ENCODE measurements at regions of chr2 and their contacts with region 1.

Region 1: DNA sequence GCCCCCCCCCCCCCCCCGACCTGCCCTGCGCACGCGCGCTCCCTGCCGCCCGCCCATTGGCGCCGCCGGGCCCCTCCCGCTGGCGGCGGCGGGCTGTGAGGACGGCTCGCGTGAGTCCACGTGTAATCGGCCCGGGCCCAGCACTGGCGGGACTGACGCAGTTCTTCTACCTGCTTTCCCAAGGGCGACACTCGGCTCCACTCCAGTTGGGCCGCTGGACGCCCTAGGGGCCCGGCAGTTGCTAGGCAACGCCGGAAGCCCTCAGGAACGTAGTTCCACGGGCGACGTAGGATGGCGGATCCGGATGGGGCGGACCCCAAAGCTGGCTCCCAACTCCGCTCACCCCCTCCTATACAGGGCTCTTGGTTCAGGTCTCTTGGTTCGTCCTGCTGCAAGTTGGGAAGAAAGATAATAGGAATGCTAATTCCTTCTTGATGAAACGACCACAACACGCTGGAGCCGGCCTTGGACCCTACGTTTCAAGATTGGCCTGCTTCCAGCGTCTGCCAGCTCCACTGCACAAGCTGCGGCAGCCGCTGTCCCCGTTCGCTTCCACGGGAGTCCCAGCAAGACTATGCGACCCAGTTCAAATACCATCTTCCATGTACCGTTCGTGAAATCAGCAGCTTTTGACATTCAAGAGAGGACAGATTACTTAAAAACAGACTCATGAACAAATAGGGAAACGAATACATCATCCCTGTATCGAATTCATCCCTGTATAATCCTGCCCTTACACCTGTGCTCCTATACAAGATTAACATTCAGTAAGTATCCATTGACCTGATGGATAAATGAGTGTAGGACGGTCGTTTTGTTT is 415 bp upstream of the MCFD2 start:
- DNase-seq: peak; percentile 54 to 92 (median 74)
- ATAC-seq: peak; percentile 85
- H3K4me3 ChIP-seq: peak overlapping the region; percentile 80
- H3K4me3 Mint-ChIP-seq: peak overlapping the region; percentile 82
- H3K27ac ChIP-seq: peak overlapping the region; percentile 74 to 87
- H3K27ac Mint-ChIP-seq: peak overlapping the region; percentile 86
- H3K4me1 ChIP-seq: peaks cover 41% of the 10 kb centered on the region
- H3K4me1 Mint-ChIP-seq: peaks cover 65% of the 10 kb centered on the region
- H3K27me3 ChIP-seq: no peaks in the 10 kb centered on the region
- H3K27me3 Mint-ChIP-seq: no peaks in the 10 kb centered on the region
- CTCF ChIP-seq: no peak

Region 2: GRCh38 chr2:47272031-47272864 is 356.2 kb after region 1 on chr2:
- CTCF ChIA-PET with region 1: no interaction called
- POLR2A ChIA-PET with region 1: no interaction called
- intact Hi-C with region 1: loop called in 1 of 2 experiments (anchors 5 kb)
- DNase-seq: peak; percentile 28 to 78 (median 38)
- ATAC-seq: peak; percentile 91
- H3K4me3 ChIP-seq: peak overlapping the region; percentile 36
- H3K4me3 Mint-ChIP-seq: no peak overlapping the region
- H3K27ac ChIP-seq: no peak overlapping the region
- H3K27ac Mint-ChIP-seq: no peak overlapping the region
- H3K4me1 ChIP-seq: peaks cover 13% of the 10 kb centered on the region
- H3K4me1 Mint-ChIP-seq: no peaks in the 10 kb centered on the region
- H3K27me3 ChIP-seq: no peaks in the 10 kb centered on the region
- H3K27me3 Mint-ChIP-seq: no peaks in the 10 kb centered on the region
- CTCF ChIP-seq: peak; percentile 93

Region 3: GRCh38 chr2:47323009-47323821 is 407.2 kb after region 1 on chr2:
- CTCF ChIA-PET with region 1: interaction called, 3 read pairs
- POLR2A ChIA-PET with region 1: no interaction called
- intact Hi-C with region 1: loop called in 1 of 2 experiments (anchors 2 kb)
- DNase-seq: peak; percentile 30 to 76 (median 54)
- ATAC-seq: peak; percentile 96
- H3K4me3 ChIP-seq: no peak overlapping the region
- H3K4me3 Mint-ChIP-seq: no peak overlapping the region
- H3K27ac ChIP-seq: no peak overlapping the region
- H3K27ac Mint-ChIP-seq: no peak overlapping the region
- H3K4me1 ChIP-seq: peaks cover 5% of the 10 kb centered on the region
- H3K4me1 Mint-ChIP-seq: no peaks in the 10 kb centered on the region
- H3K27me3 ChIP-seq: no peaks in the 10 kb centered on the region
- H3K27me3 Mint-ChIP-seq: peaks cover 4% of the 10 kb centered on the region
- CTCF ChIP-seq: peak; percentile 68

Measured in CD4-positive, alpha-beta T cell (primary cell).